ENCODE measurements at regions of chr1 and their contacts with region 1.

Region 1: GRCh38 chr1:67741121-67741520 is 56.1 kb downstream of the GADD45A start:
- DNase-seq: no peak
- ATAC-seq: no peak
- H3K4me3 ChIP-seq: no peak overlapping the region
- H3K27ac ChIP-seq: no peak overlapping the region
- H3K4me1 ChIP-seq: peaks cover 8% of the 10 kb centered on the region
- H3K27me3 ChIP-seq: no peaks in the 10 kb centered on the region
- CTCF ChIP-seq: no peak

Region 2: DNA sequence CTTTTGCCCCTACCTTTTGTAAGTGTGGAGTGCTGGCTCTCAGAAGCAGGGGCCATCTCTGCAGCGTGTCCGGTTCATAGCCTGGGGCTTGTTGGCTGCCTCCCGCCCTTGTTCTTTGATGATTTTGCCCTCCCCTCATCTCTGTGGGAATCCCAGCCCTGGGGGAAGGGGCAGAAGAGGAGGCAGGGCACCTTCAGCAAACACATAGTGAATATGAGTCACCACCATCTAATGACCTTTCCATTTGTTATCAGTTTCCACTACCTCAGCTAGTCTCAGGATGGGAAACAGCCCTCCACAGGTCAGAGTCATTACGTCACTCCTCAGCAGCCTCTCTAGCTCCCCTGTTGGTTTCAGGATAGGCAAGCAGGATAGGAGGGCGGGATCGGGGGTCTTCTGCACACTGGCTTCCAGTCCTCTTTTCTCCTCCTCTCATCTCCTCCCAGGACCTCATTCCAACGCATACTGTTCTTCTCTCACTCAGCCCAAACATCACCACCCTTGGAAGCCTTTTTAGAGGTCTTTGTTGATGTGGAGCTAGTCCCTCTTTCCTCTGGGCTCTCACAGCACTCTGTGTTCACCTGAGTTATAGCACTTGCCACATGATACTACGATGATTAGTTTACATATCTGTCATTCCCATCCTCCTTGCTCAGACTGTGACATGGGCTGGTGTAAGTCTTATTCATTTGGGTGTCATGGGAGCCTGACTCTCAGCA is 40.3 kb before region 1 on chr1:
- intact Hi-C with region 1: loop called in 1 of 2 experiments (anchors 5 kb)
- DNase-seq: no peak
- ATAC-seq: peak; percentile 45 to 54 (median 48)
- H3K4me3 ChIP-seq: no peak overlapping the region
- H3K27ac ChIP-seq: no peak overlapping the region
- H3K4me1 ChIP-seq: no peaks in the 10 kb centered on the region
- H3K27me3 ChIP-seq: no peaks in the 10 kb centered on the region
- CTCF ChIP-seq: no peak

Measured in psoas muscle (tissue), 8 donors.